ENCODE measurements at regions of chr2 and their contacts with region 1.

Region 1: GRCh38 chr2:236025892-236026291 is 142.3 kb downstream of the GBX2 start:
- DNase-seq: no peak
- ATAC-seq: no peak
- H3K4me3 ChIP-seq: no peak overlapping the region
- H3K27ac ChIP-seq: no peak overlapping the region
- H3K4me1 ChIP-seq: no peaks in the 10 kb centered on the region
- H3K27me3 ChIP-seq: no peaks in the 10 kb centered on the region
- CTCF ChIP-seq: no peak
- EP300 ChIP-seq: no peak
- POLR2A ChIP-seq: no peak
- RAD21 ChIP-seq: no peak

Region 2: GRCh38 chr2:235992024-235992423 is 33.9 kb before region 1 on chr2:
- CTCF ChIA-PET with region 1: no interaction called
- POLR2A ChIA-PET with region 1: no interaction called
- in situ Hi-C with region 1: no loop called
- intact Hi-C with region 1: loop called (anchors 1 kb)
- DNase-seq: no peak
- ATAC-seq: no peak
- H3K4me3 ChIP-seq: no peak overlapping the region
- H3K27ac ChIP-seq: no peak overlapping the region
- H3K4me1 ChIP-seq: no peaks in the 10 kb centered on the region
- H3K27me3 ChIP-seq: no peaks in the 10 kb centered on the region
- CTCF ChIP-seq: no peak
- EP300 ChIP-seq: no peak
- POLR2A ChIP-seq: no peak
- RAD21 ChIP-seq: no peak

Measured in HepG2 (cell line).